MCF 10A (cell line): ENCODE measurements at regions of chr19 and their contacts with region 1.

Region 1: DNA sequence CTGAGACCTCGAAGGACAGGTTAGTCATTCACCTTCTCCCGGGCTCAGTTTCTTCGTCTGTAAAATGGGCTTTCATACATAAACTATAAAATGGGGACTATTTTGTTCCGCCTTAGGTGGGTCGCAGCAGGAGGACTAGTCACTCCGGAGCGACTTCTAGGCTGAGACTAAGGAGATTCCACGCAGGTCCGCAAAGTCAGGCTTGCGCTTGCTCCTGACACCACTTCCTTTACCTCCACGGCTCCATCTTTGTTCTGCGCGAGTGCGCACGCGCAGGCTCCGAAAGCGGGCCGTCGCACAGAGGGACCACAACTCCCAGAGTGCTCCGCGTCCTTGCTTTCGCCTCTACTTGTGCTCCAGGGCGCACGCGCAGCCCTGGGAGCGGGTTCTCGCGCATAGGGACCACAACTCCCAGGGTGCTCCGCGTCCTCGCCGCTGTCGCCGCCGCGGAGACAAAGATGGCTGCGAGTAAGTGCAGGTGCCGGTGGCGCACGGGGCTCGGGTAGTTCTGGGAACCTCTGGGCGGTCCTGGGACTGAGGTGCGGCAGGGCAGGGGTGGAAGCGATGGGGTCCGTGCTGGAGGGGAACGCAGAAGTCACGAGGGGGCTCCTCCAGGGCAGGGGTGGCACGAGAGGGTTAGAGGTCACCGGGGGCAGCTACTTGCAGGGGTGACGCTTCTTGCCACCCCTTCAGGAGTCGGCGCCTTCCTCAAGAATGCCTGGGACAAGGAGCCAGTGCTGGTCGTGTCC is at the start of gene NDUFA3:
- DNase-seq: peak; percentile 99
- H3K4me3 Mint-ChIP-seq: peak within 1 kb of the TSS; percentile 99
- H3K27ac Mint-ChIP-seq: peak within 1 kb of the TSS; percentile 91
- H3K4me1 Mint-ChIP-seq: peaks cover 9% of the 10 kb centered on the region
- H3K27me3 Mint-ChIP-seq: no peaks in the 10 kb centered on the region
- CTCF ChIP-seq: no peak
- total RNA-seq, gene NDUFA3: 111 and 128 TPM in 2 replicates

Region 2: GRCh38 chr19:53867225-53868090 is 235.1 kb before region 1 on chr19 and contains the start of gene MYADM:
- CTCF ChIA-PET with region 1: no interaction called
- POLR2A ChIA-PET with region 1: interaction called, 7 read pairs
- intact Hi-C with region 1: loop called (anchors 10 kb)
- DNase-seq: peak; percentile 97
- H3K4me3 Mint-ChIP-seq: peak within 1 kb of the TSS; percentile 97
- H3K27ac Mint-ChIP-seq: peak within 1 kb of the TSS; percentile 100
- H3K4me1 Mint-ChIP-seq: peaks cover 20% of the 10 kb centered on the region
- H3K27me3 Mint-ChIP-seq: no peaks in the 10 kb centered on the region
- CTCF ChIP-seq: no peak
- total RNA-seq, gene MYADM: 39.0 and 43.3 TPM in 2 replicates

Region 3: DNA sequence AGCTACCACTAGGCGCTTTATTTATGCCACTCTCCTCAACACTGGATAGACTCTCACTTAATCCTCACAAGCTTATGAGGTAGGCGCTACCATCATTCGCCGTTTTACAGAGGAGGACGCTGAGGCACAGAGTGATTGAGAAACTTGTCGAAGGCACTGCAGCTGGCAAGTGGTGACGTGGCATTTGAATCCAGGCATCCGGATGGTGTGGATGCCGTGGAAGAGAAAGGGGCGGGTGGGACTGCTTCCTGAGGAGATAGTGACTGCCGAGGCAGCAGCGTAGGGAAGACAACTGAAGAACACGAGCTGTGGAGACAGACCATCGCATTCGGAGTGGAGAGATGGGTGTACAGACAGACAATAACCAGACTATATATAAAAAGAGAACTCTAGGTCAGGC is 96.9 kb after region 1 on chr19:
- CTCF ChIA-PET with region 1: no interaction called
- POLR2A ChIA-PET with region 1: no interaction called
- intact Hi-C with region 1: no loop called
- DNase-seq: no peak
- H3K4me3 Mint-ChIP-seq: peak overlapping the region; percentile 52
- H3K27ac Mint-ChIP-seq: no peak overlapping the region
- H3K4me1 Mint-ChIP-seq: peaks cover 6% of the 10 kb centered on the region
- H3K27me3 Mint-ChIP-seq: no peaks in the 10 kb centered on the region
- CTCF ChIP-seq: no peak